K562 (cell line): ENCODE measurements at regions of chr1 and their contacts with region 1.

Region 1: GRCh38 chr1:201709564-201710295 is 119.2 kb upstream of the IPO9 start:
- DNase-seq: peak; percentile 79 to 89 (median 85)
- ATAC-seq: peak; percentile 98
- H3K4me3 ChIP-seq: no peak overlapping the region
- H3K27ac ChIP-seq: no peak overlapping the region
- H3K4me1 ChIP-seq: peaks cover 12 to 23% of the 10 kb centered on the region in 2 experiments; a peak in 4 of 5 replicates
- H3K27me3 ChIP-seq: peaks cover 0 to 4% of the 10 kb centered on the region in 2 experiments; a peak in 1 of 5 replicates
- CTCF ChIP-seq: peak; percentile 92 to 94 (median 94)
- EP300 ChIP-seq: no peak
- POLR2A ChIP-seq: no peak
- RAD21 ChIP-seq: peak; percentile 91 to 93

Region 2: GRCh38 chr1:201748335-201748734 is 38.6 kb after region 1 on chr1:
- CTCF ChIA-PET with region 1: no interaction called
- POLR2A ChIA-PET with region 1: no interaction called
- in situ Hi-C with region 1: no loop called
- intact Hi-C with region 1: loop called (anchors 2 kb)
- DNase-seq: no peak
- ATAC-seq: no peak
- H3K4me3 ChIP-seq: no peak overlapping the region
- H3K27ac ChIP-seq: no peak overlapping the region
- H3K4me1 ChIP-seq: no peaks in the 10 kb centered on the region; a peak in 2 of 5 replicates
- H3K27me3 ChIP-seq: no peaks in the 10 kb centered on the region; a peak in 1 of 5 replicates
- CTCF ChIP-seq: no peak
- EP300 ChIP-seq: no peak
- POLR2A ChIP-seq: no peak
- RAD21 ChIP-seq: no peak

Region 3: DNA sequence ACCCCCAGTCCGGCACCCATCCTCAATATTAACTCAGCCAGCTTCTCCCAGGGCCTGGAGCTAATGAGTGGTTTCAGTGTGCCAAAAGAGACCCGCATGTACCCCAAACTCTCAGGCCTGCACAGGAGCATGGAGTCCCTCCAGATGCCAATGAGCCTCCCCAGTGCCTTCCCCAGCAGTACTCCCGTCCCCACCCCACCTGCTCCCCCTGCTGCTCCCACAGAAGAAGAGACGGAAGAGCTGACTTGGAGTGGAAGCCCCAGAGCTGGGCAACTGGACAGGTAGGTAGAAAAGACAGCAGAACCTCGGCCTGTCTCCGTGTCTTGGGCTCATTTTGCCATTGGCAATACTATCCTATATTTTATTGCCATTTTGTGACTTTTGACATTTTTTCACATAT is 73.8 kb after region 1 on chr1:
- CTCF ChIA-PET with region 1: interaction called, 6 read pairs
- POLR2A ChIA-PET with region 1: no interaction called
- in situ Hi-C with region 1: loop called (anchors 5 kb)
- intact Hi-C with region 1: no loop called
- DNase-seq: peak in 3 of 4 experiments; percentile 23 to 35 (median 30)
- ATAC-seq: peak; percentile 79
- H3K4me3 ChIP-seq: no peak overlapping the region
- H3K27ac ChIP-seq: no peak overlapping the region
- H3K4me1 ChIP-seq: peaks cover 0 to under 1% of the 10 kb centered on the region in 2 experiments; a peak in 1 of 5 replicates
- H3K27me3 ChIP-seq: peaks cover 0 to 15% of the 10 kb centered on the region in 2 experiments; a peak in 2 of 5 replicates
- CTCF ChIP-seq: peak; percentile 25 to 51 (median 44); a peak in 4 of 6 replicates
- EP300 ChIP-seq: no peak
- POLR2A ChIP-seq: no peak
- RAD21 ChIP-seq: peak; percentile 16 to 33; a peak in 2 of 4 replicates

Region 4: GRCh38 chr1:201792534-201793305 is 83.0 kb after region 1 on chr1:
- CTCF ChIA-PET with region 1: interaction called, 73 read pairs
- POLR2A ChIA-PET with region 1: interaction called, 15 read pairs
- in situ Hi-C with region 1: loop called (anchors 5 kb)
- intact Hi-C with region 1: loop called (anchors 1 kb)
- DNase-seq: peak; percentile 80 to 86 (median 84)
- ATAC-seq: peak; percentile 98
- H3K4me3 ChIP-seq: no peak overlapping the region
- H3K27ac ChIP-seq: no peak overlapping the region
- H3K4me1 ChIP-seq: no peaks in the 10 kb centered on the region
- H3K27me3 ChIP-seq: no peaks in the 10 kb centered on the region; a peak in 1 of 5 replicates
- CTCF ChIP-seq: peak; percentile 95 to 99 (median 98)
- EP300 ChIP-seq: no peak
- POLR2A ChIP-seq: no peak
- RAD21 ChIP-seq: peak; percentile 97 to 99